Endothelial cell of umbilical vein (primary cell): ENCODE measurements at regions of chr3 and their contacts with region 1.

Region 1: DNA sequence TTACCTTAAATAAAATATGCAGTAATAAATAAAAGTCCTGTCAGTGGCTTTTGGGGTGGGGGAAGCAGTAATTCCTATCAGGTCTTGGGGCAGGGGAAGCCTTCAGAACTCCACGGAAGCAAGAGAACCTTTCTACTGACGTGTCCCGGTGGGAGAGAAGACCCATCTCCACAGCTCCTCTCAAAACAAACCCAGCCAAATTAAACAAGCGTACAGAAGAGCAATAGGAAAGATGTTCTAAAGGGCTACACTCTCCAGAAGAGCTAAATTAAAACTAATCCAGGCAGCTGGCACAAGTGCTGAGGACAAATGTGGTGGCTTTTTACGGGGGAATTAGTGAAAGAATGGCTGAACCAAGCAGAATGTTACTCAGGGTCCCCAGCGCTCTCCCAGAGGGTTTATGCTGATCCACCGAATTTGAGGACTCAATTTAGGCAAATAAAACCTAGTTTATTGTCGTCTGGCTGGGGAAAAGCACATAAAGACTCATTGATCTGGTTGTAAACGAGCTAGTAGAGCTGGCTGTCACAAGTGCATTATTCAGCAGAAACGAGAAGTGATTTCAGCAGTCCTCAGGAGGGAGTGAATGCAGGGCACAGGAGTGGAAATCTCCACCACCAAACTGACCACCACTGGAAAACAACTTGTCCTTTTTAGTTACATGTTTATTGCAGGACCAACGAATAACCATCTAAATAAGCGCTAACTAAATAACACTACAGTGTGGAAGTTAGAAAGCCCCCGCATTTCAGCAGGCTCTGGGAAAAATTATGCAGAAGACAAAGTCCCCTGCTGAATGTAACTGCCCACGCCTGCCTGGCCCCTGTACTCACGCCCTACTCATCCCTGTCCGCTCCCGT is 13.5 kb downstream of the BFSP2 start:
- DNase-seq: no peak
- H3K4me3 ChIP-seq: no peak overlapping the region
- H3K27ac ChIP-seq: no peak overlapping the region
- H3K4me1 ChIP-seq: no peaks in the 10 kb centered on the region
- H3K27me3 ChIP-seq: peaks cover 7 to 10% of the 10 kb centered on the region in 2 experiments
- CTCF ChIP-seq: no peak
- POLR2A ChIP-seq: no peak

Region 2: DNA sequence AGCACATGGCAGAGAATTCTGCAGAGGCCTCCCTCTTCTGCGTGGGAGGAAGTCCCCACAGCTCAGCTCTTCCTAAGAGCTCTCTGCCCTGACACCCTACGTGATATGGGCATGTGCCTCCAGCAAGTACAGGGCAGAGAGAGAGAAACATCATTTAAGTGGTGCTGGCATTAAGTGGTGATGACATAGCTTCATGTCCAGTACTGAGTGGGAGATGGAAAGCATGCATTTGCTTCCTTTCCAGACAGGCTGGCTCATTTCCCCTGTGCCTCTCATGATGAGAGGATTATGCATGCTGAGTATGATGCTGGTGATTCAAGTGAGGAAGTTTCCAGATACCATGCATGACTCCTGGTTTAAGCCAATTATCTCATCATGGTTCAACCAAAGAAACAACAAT is 13.3 kb after region 1 on chr3:
- CTCF ChIA-PET with region 1: interaction called, 12 read pairs
- POLR2A ChIA-PET with region 1: interaction called, 8 read pairs
- dilution Hi-C with region 1: no loop called
- intact Hi-C with region 1: no loop called
- DNase-seq: no peak
- H3K4me3 ChIP-seq: no peak overlapping the region
- H3K27ac ChIP-seq: no peak overlapping the region
- H3K4me1 ChIP-seq: no peaks in the 10 kb centered on the region
- H3K27me3 ChIP-seq: peaks cover 0 to 12% of the 10 kb centered on the region in 2 experiments
- CTCF ChIP-seq: no peak
- POLR2A ChIP-seq: no peak

Region 3: GRCh38 chr3:134039161-134039862 is 625.9 kb after region 1 on chr3:
- CTCF ChIA-PET with region 1: no interaction called
- POLR2A ChIA-PET with region 1: no interaction called
- dilution Hi-C with region 1: no loop called
- intact Hi-C with region 1: no loop called
- DNase-seq: no peak
- H3K4me3 ChIP-seq: no peak overlapping the region
- H3K27ac ChIP-seq: no peak overlapping the region
- H3K4me1 ChIP-seq: no peaks in the 10 kb centered on the region
- H3K27me3 ChIP-seq: no peaks in the 10 kb centered on the region
- CTCF ChIP-seq: peak; percentile 15 to 40
- POLR2A ChIP-seq: no peak